Heart right ventricle (tissue), 16 donors: ENCODE measurements at regions of chr15 and their contacts with region 1.

Region 1: GRCh38 chr15:98525661-98526001 is 122.7 kb upstream of the IGF1R start:
- DNase-seq: no peak
- ATAC-seq: peak in 1 of 8 donors; percentile 41
- H3K4me3 ChIP-seq: no peak overlapping the region
- H3K27ac ChIP-seq: peak overlapping the region in 1 of 10 donors; percentile 15
- H3K4me1 ChIP-seq: no peaks in the 10 kb centered on the region
- H3K27me3 ChIP-seq: peaks cover 0 to 24% (median 10%) of the 10 kb centered on the region in 7 donors
- CTCF ChIP-seq: no peak

Region 2: DNA sequence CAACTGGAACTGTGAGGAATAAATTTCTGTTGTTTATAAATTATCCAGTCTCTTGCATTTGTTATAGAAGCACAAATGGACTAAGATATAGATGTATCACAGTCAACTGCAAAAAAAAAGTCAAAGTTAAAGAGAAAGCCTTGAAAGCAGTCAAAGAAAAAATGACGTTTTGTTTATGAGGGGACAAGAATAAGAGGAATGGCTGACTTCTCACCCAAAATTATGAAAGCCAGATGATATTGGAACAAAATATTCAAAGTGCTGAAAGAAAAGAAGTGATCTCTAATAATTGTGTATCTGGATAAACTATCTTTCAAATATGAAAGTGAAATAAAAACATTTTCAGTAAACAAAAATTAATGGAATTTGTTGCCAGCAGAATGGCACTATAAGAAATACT is 49.1 kb before region 1 on chr15:
- intact Hi-C with region 1: no loop called
- DNase-seq: no peak
- ATAC-seq: no peak
- H3K4me3 ChIP-seq: no peak overlapping the region
- H3K27ac ChIP-seq: no peak overlapping the region
- H3K4me1 ChIP-seq: no peaks in the 10 kb centered on the region
- H3K27me3 ChIP-seq: peaks cover 0 to 3% (median 0%) of the 10 kb centered on the region in 7 donors
- CTCF ChIP-seq: no peak

Region 3: DNA sequence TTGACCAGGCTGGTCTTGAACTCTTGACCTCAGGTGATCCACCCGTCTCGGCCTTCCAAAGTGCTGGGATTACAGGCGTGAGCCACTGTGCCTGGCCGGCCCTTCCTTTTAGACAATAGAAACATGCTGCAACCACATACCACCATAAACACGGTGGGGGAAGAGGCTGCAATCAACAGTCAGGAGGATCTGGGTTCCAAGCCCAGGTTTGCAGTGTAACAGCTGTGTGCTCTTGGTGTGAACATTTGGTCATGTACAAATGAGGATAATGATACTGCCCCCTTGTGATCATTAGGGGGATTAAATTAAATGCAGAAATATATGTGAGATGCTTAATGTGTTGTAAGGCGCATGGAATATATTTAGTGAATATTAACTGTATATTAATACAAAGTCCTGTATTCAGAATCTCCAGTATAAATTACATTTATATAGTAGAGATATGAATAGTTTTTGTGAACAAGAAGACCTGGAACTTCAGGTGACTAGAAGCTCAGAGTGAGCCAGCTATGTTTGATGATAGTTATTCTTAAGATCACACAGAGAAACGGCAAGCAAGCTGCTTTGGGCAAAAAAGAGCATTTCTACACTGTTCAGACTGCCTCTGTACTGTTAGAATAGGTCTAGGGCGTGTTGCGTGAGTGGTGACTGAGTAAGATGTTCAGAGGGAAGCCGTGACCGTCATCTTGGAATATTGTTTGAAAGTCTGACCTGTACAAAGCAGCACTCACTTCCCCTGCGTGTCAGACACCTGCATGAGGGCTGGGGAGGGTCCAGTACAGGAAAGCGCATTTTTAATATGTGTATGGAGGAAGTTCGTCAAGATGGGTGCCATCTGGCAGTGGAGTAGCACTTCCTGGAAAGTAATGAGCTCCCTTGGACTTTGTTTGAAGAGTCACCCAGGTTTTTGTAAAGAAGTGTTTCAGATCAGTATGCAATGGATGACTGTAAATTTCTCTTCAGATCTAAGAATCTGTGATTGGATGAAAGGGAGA is 356.2 kb after region 1 on chr15:
- intact Hi-C with region 1: loop called in 1 of 10 experiments (anchors 10 kb)
- DNase-seq: no peak
- ATAC-seq: peak in 3 of 8 donors; percentile 35 to 54 (median 41)
- H3K4me3 ChIP-seq: no peak overlapping the region
- H3K27ac ChIP-seq: no peak overlapping the region
- H3K4me1 ChIP-seq: peaks cover 8 to 81% (median 56%) of the 10 kb centered on the region in 9 donors
- H3K27me3 ChIP-seq: no peaks in the 10 kb centered on the region
- CTCF ChIP-seq: peak; percentile 30 to 75 (median 63)